Activated CD8-positive, alpha-beta memory T cell treated with anti-CD3 and anti-CD28 coated beads, Interleukin-2, amount 10 ng/mL, durations not matched to agents 7 days and 5 days (primary cell): ENCODE measurements at regions of chr3 and their contacts with region 1.

Region 1: DNA sequence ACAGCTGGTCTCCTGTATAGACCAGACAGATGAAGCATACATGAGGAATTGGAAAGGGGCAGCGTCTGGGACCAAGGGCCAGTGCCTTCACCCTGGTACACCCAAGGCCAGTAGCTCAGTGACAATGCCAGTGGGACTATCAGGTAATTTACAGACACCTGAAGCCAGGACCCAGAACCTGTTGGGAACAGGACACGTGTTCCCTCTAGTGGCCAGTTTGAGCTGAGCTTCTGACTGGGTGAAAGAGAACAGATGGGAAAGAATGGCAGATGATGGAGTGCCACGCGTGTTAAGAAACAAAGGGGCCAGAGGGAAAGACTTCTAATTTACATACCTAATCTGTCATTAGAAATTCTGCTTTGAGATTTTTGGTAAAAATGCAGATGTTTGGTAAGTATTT is 5.1 kb upstream of the SLC25A38 start:
- DNase-seq: peak; percentile 78
- ATAC-seq: peak; percentile 80
- H3K4me3 Mint-ChIP-seq: no peak overlapping the region
- H3K27ac Mint-ChIP-seq: peak overlapping the region; percentile 45
- H3K4me1 Mint-ChIP-seq: peaks cover 22% of the 10 kb centered on the region
- H3K27me3 Mint-ChIP-seq: no peaks in the 10 kb centered on the region

Region 2: GRCh38 chr3:39189959-39190269 is 188.2 kb before region 1 on chr3:
- CTCF ChIA-PET with region 1: interaction called, 19 read pairs
- DNase-seq: peak; percentile 63
- ATAC-seq: peak; percentile 70
- H3K4me3 Mint-ChIP-seq: no peak overlapping the region
- H3K27ac Mint-ChIP-seq: peak overlapping the region; percentile 56
- H3K4me1 Mint-ChIP-seq: peaks cover 8% of the 10 kb centered on the region
- H3K27me3 Mint-ChIP-seq: no peaks in the 10 kb centered on the region

Region 3: DNA sequence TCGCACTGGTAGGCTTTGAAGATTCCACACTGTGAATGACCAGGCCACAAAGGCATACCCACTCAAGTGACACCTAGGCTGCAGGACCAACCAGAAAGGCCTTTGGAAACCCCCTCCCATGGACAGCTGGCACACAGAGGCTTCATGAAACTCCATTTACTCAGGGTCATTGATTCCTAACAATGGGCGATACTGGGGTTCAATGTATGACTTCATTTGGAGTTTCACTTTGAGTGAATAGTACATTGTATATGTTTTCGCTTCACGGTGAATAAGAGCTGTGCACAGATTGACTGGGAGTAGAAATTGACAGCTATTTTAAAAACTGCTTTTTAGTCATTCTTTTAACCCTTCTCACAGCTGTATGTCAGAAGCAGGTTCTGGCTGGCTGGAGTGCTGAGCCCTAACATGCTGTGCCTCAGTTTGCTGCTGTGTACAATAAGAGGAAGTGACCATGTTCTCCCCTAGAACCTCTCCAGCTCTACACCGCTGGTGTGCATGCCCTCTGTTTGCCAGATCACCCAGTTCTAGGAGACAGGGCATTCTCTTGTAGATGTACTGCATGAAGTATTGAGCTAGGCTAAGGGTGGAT is 82.8 kb before region 1 on chr3:
- CTCF ChIA-PET with region 1: interaction called, 107 read pairs
- DNase-seq: no peak
- ATAC-seq: peak; percentile 66
- H3K4me3 Mint-ChIP-seq: no peak overlapping the region
- H3K27ac Mint-ChIP-seq: no peak overlapping the region
- H3K4me1 Mint-ChIP-seq: peaks cover 38% of the 10 kb centered on the region
- H3K27me3 Mint-ChIP-seq: peaks cover 16% of the 10 kb centered on the region

Region 4: GRCh38 chr3:39361252-39361927 is 16.7 kb before region 1 on chr3:
- CTCF ChIA-PET with region 1: interaction called, 32 read pairs
- DNase-seq: peak; percentile 86
- ATAC-seq: peak; percentile 86
- H3K4me3 Mint-ChIP-seq: peak overlapping the region; percentile 60
- H3K27ac Mint-ChIP-seq: peak overlapping the region; percentile 83
- H3K4me1 Mint-ChIP-seq: peaks cover 57% of the 10 kb centered on the region
- H3K27me3 Mint-ChIP-seq: peaks cover 8% of the 10 kb centered on the region